Naive thymus-derived CD4-positive, alpha-beta T cell (primary cell): ENCODE measurements at regions of chr21 and their contacts with region 1.

Region 1: DNA sequence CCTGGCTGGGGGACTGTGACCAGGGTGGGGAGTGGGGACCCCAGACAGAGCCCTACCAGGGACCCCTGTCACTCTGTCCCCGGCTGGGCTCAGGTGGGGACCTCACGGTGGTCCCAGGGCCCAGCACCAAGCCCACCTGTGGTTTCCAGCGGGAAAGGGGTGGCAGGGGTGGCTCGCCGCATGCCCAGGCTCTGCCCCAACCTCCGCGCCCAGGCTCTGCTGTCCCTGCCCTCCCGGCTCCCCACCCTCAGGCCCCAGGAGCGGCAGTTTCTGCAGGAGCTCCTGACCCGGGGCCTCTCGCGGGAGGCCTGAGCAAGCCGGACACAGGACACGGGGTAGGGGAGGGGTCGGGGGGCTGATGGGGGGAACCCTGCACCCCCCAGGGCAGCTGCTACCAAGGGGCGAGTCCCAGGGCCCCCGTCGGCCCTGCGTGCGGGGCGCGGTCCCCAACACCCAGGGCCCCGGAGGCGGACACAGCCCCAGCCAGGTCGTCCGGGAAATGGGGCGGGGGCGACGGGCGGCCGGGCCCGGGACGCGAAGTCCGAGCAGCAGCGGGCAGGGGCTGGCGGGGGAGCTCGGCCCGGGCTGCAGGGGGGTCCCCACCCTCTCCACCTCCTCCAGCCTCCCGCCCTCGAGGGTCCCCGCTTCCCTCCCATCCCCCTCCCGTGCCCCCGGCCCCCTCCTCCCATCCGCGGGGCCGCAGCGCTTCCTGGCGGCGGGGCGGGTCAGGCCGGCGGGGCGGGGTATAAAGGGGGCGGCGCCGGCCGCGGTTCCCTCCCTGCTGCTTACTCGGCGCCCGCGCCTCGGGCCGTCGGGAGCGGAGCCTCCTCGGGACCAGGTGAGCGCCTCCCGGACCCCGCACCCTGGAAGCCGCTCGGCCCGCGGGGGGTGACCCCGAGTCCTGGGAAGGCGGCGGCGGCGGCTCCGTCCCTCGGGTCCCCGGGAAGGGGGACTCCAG is at the start of gene COL6A2:
- DNase-seq: peak in 8 of 9 donors; percentile 35 to 67 (median 48)
- ATAC-seq: peak; percentile 87
- H3K4me3 ChIP-seq: no peak within 1 kb of the TSS
- H3K4me3 Mint-ChIP-seq: peak within 1 kb of the TSS; percentile 60 to 81 (median 71)
- H3K27ac ChIP-seq: peak within 1 kb of the TSS; percentile 57
- H3K27ac Mint-ChIP-seq: peak within 1 kb of the TSS in 6 of 9 donors; percentile 3 to 82 (median 31)
- H3K4me1 ChIP-seq: peaks cover 0 to 21% of the 10 kb centered on the region in 2 donors
- H3K4me1 Mint-ChIP-seq: peaks cover 0 to 18% (median 4%) of the 10 kb centered on the region in 7 donors
- H3K27me3 ChIP-seq: no peaks in the 10 kb centered on the region
- H3K27me3 Mint-ChIP-seq: peaks cover 0 to 34% (median 26%) of the 10 kb centered on the region in 5 donors
- total RNA-seq, gene COL6A2: 3.1 to 47.7 (median 40.3) TPM

Region 2: GRCh38 chr21:45973659-45974072 is 123.9 kb before region 1 on chr21:
- CTCF ChIA-PET with region 1: no interaction called
- POLR2A ChIA-PET with region 1: no interaction called
- intact Hi-C with region 1: loop called (anchors 1 to 10 kb)
- DNase-seq: peak; percentile 59 to 84 (median 77)
- ATAC-seq: peak; percentile 94
- H3K4me3 ChIP-seq: peak overlapping the region; percentile 78
- H3K4me3 Mint-ChIP-seq: peak overlapping the region; percentile 75 to 94 (median 92)
- H3K27ac ChIP-seq: peak overlapping the region; percentile 50
- H3K27ac Mint-ChIP-seq: peak overlapping the region in 8 of 9 donors; percentile 41 to 91 (median 80)
- H3K4me1 ChIP-seq: peaks cover 20 to 22% of the 10 kb centered on the region in 2 donors
- H3K4me1 Mint-ChIP-seq: peaks cover 5 to 28% (median 18%) of the 10 kb centered on the region in 7 donors
- H3K27me3 ChIP-seq: peaks cover 0 to 13% of the 10 kb centered on the region in 2 donors
- H3K27me3 Mint-ChIP-seq: peaks cover 0 to 44% (median 10%) of the 10 kb centered on the region in 5 donors

Region 3: DNA sequence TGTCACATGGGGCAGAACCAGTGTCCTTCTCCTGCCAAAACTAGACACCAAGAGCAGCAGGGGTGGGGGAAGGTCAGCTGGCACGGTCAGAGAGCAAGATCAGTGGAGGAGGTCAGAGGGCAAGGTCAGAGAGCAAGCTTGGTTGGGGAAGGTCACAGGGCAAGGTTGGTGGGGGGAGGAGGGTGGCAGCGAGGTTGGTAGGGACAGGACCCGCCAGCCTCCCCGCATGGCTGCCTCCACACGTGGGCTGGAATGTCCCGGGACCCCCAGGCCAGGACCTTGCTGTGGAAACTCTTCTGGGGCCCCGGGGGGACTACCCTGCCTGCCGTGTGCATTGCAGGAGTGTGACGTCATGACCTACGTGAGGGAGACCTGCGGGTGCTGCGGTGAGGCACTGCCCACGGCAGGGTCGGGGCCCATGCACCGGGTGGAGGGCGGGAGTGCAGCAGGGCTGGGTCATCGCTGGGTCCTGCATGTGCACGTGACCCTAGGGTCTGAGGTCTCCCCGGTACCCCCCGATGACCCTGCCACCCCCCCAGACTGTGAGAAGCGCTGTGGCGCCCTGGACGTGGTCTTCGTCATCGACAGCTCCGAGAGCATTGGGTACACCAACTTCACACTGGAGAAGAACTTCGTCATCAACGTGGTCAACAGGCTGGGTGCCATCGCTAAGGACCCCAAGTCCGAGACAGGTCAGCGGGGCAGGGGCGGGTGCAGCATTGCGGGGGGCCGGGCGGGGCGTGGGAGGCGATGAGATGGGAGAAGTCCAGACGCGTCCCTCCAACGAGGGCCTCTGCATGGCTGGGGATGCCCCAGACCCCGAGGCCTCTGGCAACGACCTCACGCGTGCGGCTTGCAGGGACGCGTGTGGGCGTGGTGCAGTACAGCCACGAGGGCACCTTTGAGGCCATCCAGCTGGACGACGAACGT is 27.6 kb after region 1 on chr21:
- CTCF ChIA-PET with region 1: no interaction called
- POLR2A ChIA-PET with region 1: no interaction called
- intact Hi-C with region 1: no loop called
- DNase-seq: peak in 3 of 9 donors; percentile 5 to 17 (median 5)
- ATAC-seq: no peak
- H3K4me3 ChIP-seq: no peak overlapping the region
- H3K4me3 Mint-ChIP-seq: no peak overlapping the region
- H3K27ac ChIP-seq: no peak overlapping the region
- H3K27ac Mint-ChIP-seq: no peak overlapping the region
- H3K4me1 ChIP-seq: no peaks in the 10 kb centered on the region
- H3K4me1 Mint-ChIP-seq: peaks cover 0 to 4% (median 0%) of the 10 kb centered on the region in 7 donors
- H3K27me3 ChIP-seq: no peaks in the 10 kb centered on the region
- H3K27me3 Mint-ChIP-seq: no peaks in the 10 kb centered on the region

Region 4: DNA sequence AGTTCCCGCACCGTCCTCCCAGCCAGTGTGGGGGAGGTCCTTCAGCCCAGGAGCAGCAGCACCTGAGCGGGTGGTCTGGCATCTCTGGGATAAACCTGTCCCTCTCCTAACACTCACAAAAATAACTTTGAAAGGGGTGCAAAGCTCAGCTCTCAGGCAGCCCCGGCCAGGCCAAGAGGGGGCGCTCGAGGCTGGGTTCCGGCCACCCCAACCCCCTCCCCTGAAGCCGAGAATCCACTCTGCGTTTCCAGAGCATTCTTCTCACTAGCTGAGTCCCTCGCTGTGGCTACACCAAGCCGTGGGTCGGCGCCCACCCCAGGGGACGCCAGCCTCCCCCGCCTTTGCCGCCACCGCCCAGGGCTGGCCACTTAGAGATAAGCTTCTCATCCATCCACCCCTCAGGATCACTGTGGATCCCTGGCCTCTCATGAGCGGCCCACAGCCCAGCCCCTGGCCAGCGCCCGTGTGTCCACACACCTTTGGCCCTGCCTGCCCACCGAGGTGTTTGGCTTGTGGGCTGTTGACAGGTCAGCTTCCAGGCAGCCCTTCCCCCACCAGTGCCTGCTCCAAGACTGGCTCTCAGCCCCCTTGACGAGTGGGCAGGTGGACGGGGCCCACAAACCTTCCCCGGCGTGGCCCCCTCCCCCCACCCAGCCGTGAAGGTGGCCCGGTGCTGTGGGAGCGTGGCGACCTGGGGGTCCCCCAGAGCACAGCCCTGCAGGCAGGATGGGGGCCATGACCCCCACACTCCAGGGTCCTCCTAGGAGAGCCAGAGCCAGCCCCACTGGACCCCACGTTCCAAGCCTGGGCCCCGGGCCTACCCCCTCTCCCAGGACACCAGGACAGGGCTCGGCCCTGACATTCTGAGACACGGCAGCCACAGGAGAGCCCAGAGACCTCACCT is 55.9 kb after region 1 on chr21:
- CTCF ChIA-PET with region 1: no interaction called
- POLR2A ChIA-PET with region 1: no interaction called
- intact Hi-C with region 1: no loop called
- DNase-seq: peak in 8 of 9 donors; percentile 21 to 59 (median 38)
- ATAC-seq: peak; percentile 66
- H3K4me3 ChIP-seq: no peak overlapping the region
- H3K4me3 Mint-ChIP-seq: no peak overlapping the region
- H3K27ac ChIP-seq: no peak overlapping the region
- H3K27ac Mint-ChIP-seq: no peak overlapping the region
- H3K4me1 ChIP-seq: no peaks in the 10 kb centered on the region
- H3K4me1 Mint-ChIP-seq: peaks cover 0 to 4% (median 0%) of the 10 kb centered on the region in 7 donors
- H3K27me3 ChIP-seq: no peaks in the 10 kb centered on the region
- H3K27me3 Mint-ChIP-seq: no peaks in the 10 kb centered on the region